ENCODE measurements at regions of chr10 and their contacts with region 1.

Region 1: GRCh38 chr10:110414563-110415309 is 83.0 kb upstream of the DUSP5 start:
- DNase-seq: peak; percentile 99
- ATAC-seq: peak; percentile 83
- H3K4me3 ChIP-seq: no peak overlapping the region
- H3K27ac ChIP-seq: peak overlapping the region; percentile 93
- H3K4me1 ChIP-seq: peaks cover 69% of the 10 kb centered on the region
- H3K27me3 ChIP-seq: no peaks in the 10 kb centered on the region
- CTCF ChIP-seq: no peak
- EP300 ChIP-seq: peak; percentile 97 to 99
- POLR2A ChIP-seq: peak; percentile 49; the same call in 1 of the 2 replicates
- RAD21 ChIP-seq: peak; percentile 38

Region 2: DNA sequence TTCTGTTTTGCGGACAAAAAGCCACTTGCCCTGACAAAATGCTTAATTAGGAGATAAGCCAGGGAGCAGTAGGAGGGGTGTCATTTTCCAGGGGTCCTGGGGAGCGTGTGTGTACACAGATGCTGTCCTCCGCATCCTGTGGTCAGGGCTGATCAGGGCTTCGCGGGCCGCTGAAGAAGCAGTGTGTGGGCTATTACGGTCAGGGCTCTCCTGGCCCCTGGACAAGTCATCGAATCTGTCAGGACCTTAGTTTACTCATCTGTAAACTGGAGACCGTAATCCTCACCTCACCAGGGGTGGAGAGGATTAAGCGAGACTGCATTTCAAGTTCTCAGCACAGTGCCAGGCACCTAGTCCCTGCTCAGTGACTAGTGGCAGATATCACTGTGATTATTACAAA is 233.3 kb before region 1 on chr10:
- CTCF ChIA-PET with region 1: no interaction called
- POLR2A ChIA-PET with region 1: no interaction called
- RAD21 ChIA-PET with region 1: no interaction called
- SMC1A ChIA-PET with region 1: no interaction called
- in situ Hi-C with region 1: no loop called
- intact Hi-C with region 1: no loop called
- DNase-seq: no peak
- ATAC-seq: no peak
- H3K4me3 ChIP-seq: no peak overlapping the region
- H3K27ac ChIP-seq: no peak overlapping the region
- H3K4me1 ChIP-seq: no peaks in the 10 kb centered on the region
- H3K27me3 ChIP-seq: peaks cover 0 to 3% of the 10 kb centered on the region in 2 experiments; a peak in 2 of 4 replicates
- CTCF ChIP-seq: no peak
- EP300 ChIP-seq: no peak
- POLR2A ChIP-seq: no peak
- RAD21 ChIP-seq: no peak

Region 3: GRCh38 chr10:110311357-110311949 is 103.3 kb before region 1 on chr10:
- CTCF ChIA-PET with region 1: no interaction called
- POLR2A ChIA-PET with region 1: no interaction called
- RAD21 ChIA-PET with region 1: interaction called, 4 read pairs
- SMC1A ChIA-PET with region 1: interaction called, 5 read pairs
- in situ Hi-C with region 1: no loop called
- intact Hi-C with region 1: loop called (anchors 2 kb)
- DNase-seq: peak; percentile 47
- ATAC-seq: peak; percentile 83
- H3K4me3 ChIP-seq: no peak overlapping the region
- H3K27ac ChIP-seq: no peak overlapping the region
- H3K4me1 ChIP-seq: 0 out of 2 replicates have a peak, but pooled peaks cover 2% of the 10 kb centered on the region
- H3K27me3 ChIP-seq: no peaks in the 10 kb centered on the region
- CTCF ChIP-seq: peak; percentile 62 to 76 (median 68); a peak in 5 of 6 replicates
- EP300 ChIP-seq: no peak
- POLR2A ChIP-seq: no peak
- RAD21 ChIP-seq: peak; percentile 96

Region 4: GRCh38 chr10:110361800-110362456 is 52.8 kb before region 1 on chr10:
- CTCF ChIA-PET with region 1: interaction called, 124 read pairs
- POLR2A ChIA-PET with region 1: interaction called, 90 read pairs
- RAD21 ChIA-PET with region 1: interaction called, 241 read pairs
- SMC1A ChIA-PET with region 1: interaction called, 283 read pairs
- in situ Hi-C with region 1: loop called (anchors 5 kb)
- intact Hi-C with region 1: no loop called
- DNase-seq: no peak
- ATAC-seq: peak; percentile 44
- H3K4me3 ChIP-seq: no peak overlapping the region
- H3K27ac ChIP-seq: peak overlapping the region; percentile 13; the same call in 1 of the 2 replicates
- H3K4me1 ChIP-seq: peaks cover 46% of the 10 kb centered on the region
- H3K27me3 ChIP-seq: no peaks in the 10 kb centered on the region
- CTCF ChIP-seq: no peak
- EP300 ChIP-seq: no peak
- POLR2A ChIP-seq: no peak
- RAD21 ChIP-seq: no peak

Region 5: DNA sequence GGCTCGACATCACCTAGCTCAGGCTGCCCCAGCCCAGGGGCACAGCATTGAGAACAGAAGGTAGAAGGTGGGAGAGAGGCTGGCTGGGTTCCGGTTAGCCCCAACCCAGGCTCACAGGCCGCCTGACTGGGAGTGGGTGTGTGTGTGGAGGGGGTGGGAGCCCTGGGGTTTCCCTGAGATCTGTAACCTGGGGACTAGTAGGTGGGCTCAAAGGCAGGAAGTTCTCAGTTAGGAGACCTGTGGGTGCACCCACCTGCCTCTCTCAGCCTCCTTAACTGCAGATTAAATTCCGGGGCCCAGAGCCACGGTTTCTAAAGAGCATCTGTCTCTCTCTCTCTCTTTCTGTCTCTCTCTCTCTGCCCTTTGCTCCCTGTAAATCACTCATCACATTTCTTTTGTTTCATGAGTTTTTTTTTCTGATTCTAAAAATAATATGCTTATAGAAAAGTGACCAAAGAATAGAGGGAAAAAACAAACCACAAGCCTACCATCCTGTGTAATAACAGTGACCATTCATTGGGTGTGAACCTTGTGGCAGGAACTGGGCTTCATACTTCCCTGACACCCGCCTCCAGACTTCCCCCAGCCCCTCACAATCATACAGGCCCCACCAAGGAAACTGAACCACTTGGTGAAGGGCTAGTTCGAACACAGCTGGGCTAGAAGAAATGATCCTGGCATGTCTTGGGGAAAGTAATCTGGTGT is 26.6 kb before region 1 on chr10:
- CTCF ChIA-PET with region 1: interaction called, 7 read pairs
- POLR2A ChIA-PET with region 1: interaction called, 6 read pairs
- RAD21 ChIA-PET with region 1: interaction called, 17 read pairs
- SMC1A ChIA-PET with region 1: interaction called, 81 read pairs
- in situ Hi-C with region 1: no loop called
- intact Hi-C with region 1: loop called (anchors 1 kb)
- DNase-seq: peak; percentile 83
- ATAC-seq: peak; percentile 87
- H3K4me3 ChIP-seq: no peak overlapping the region
- H3K27ac ChIP-seq: peak overlapping the region; percentile 75
- H3K4me1 ChIP-seq: peaks cover 26% of the 10 kb centered on the region
- H3K27me3 ChIP-seq: no peaks in the 10 kb centered on the region
- CTCF ChIP-seq: no peak
- EP300 ChIP-seq: peak in 1 of 2 experiments; percentile 96; a peak in 3 of 4 replicates
- POLR2A ChIP-seq: no peak
- RAD21 ChIP-seq: peak; percentile 22; the same call in 1 of the 2 replicates

Region 6: DNA sequence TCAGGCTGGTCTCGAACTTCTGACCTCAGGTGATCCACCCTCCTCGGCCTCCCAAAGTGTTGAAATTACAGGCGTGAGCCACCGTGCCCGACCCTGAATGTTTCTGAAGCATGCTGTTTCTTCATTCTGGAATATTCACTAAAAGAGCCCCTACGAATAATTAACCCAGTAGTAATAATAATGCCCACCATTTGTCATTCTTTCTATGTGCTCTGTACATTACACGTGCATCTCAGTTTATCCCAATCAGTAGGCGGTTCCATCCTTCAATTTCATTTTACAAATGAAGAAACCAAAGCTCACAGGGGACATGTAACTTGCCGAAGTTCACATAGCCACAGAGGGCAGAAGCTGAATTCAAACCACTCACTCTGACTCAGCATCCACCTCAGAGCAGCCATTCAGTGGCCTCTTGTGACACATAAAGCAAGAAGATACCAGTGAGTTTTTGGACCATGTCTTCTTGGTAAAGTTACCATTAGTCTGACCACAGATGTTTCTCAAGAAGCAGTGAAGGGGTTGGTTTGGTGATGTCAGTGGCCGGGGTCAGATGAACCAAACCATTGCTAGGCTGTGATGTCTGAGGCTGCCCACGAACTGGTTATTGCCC is 11.1 kb after region 1 on chr10:
- CTCF ChIA-PET with region 1: interaction called, 4 read pairs
- POLR2A ChIA-PET with region 1: interaction called, 6 read pairs
- RAD21 ChIA-PET with region 1: interaction called, 31 read pairs
- SMC1A ChIA-PET with region 1: interaction called, 23 read pairs
- in situ Hi-C with region 1: no loop called
- intact Hi-C with region 1: loop called (anchors 1 kb)
- DNase-seq: peak; percentile 89
- ATAC-seq: peak; percentile 86
- H3K4me3 ChIP-seq: no peak overlapping the region
- H3K27ac ChIP-seq: peak overlapping the region; percentile 60
- H3K4me1 ChIP-seq: peaks cover 65% of the 10 kb centered on the region
- H3K27me3 ChIP-seq: no peaks in the 10 kb centered on the region
- CTCF ChIP-seq: no peak
- EP300 ChIP-seq: peak; percentile 56 to 63; a peak in 1 of 4 replicates
- POLR2A ChIP-seq: no peak
- RAD21 ChIP-seq: peak; percentile 34; the same call in 1 of the 2 replicates

Region 7: DNA sequence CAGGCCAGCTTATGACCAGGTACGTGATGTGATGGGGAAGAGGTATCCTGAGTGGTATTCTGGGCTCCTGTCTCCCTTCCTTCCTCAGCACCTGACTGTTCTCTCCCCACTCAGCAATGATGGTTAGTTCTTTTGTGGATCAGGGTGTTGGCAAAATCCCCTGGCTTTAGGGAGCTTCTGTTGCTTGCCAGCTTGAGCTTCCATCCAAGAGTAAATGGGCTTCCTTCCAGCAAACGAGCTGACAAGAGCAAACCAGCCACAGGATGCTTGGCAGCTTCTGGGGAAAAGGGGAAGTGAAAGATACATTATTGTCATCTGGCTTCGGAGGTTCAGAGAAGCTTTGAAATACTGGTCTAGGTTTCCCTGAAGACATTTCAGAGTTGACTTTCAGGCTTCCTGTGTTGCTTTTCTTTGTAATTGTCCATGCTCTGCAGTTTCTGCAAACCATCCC is 88.1 kb after region 1 on chr10:
- CTCF ChIA-PET with region 1: interaction called, 16 read pairs
- POLR2A ChIA-PET with region 1: interaction called, 94 read pairs
- RAD21 ChIA-PET with region 1: interaction called, 181 read pairs
- SMC1A ChIA-PET with region 1: interaction called, 154 read pairs
- in situ Hi-C with region 1: no loop called
- intact Hi-C with region 1: no loop called
- DNase-seq: peak; percentile 93
- ATAC-seq: peak; percentile 35
- H3K4me3 ChIP-seq: peak overlapping the region; percentile 95
- H3K27ac ChIP-seq: peak overlapping the region; percentile 91
- H3K4me1 ChIP-seq: peaks cover 49% of the 10 kb centered on the region
- H3K27me3 ChIP-seq: no peaks in the 10 kb centered on the region
- CTCF ChIP-seq: no peak
- EP300 ChIP-seq: peak; percentile 82 to 93; a peak in 3 of 4 replicates
- POLR2A ChIP-seq: peak; percentile 49
- RAD21 ChIP-seq: peak; percentile 21; the same call in 1 of the 2 replicates

Region 8: DNA sequence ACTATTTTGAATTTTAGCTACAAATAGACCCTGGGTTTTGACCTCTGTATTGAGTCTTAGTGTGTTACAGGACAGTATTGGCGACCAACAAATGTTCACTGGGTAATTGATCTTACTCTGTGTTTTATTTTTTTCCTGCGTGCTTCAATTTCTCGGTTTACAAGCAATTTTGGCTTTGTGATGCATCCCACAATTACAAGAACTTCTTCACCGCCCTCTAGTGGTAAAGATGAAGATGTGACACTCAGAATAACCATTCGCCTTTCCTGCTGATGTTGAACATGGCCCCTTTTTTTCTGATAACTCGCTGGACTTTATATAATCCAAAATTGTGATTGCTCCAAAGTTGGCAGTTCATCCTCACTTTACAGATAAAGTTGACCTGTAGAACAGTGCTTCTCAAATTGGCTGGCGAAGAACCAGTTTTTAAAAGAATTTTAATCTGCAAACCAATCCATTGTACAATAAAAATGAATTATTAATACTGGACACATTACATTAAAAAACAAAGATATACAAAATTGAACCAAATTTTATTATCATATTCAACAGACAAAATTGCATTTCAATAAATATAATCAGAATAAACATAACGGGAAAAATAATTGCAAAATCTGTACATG is 132.5 kb after region 1 on chr10:
- CTCF ChIA-PET with region 1: interaction called, 4 read pairs
- POLR2A ChIA-PET with region 1: no interaction called
- RAD21 ChIA-PET with region 1: interaction called, 10 read pairs
- SMC1A ChIA-PET with region 1: interaction called, 22 read pairs
- in situ Hi-C with region 1: no loop called
- intact Hi-C with region 1: loop called (anchors 1 kb)
- DNase-seq: no peak
- ATAC-seq: peak; percentile 89
- H3K4me3 ChIP-seq: no peak overlapping the region
- H3K27ac ChIP-seq: no peak overlapping the region
- H3K4me1 ChIP-seq: peaks cover 5% of the 10 kb centered on the region; the same call in 1 of the 2 replicates
- H3K27me3 ChIP-seq: peaks cover 0 to 2% of the 10 kb centered on the region in 2 experiments; a peak in 1 of 4 replicates
- CTCF ChIP-seq: peak; percentile 72 to 83 (median 73)
- EP300 ChIP-seq: no peak
- POLR2A ChIP-seq: no peak
- RAD21 ChIP-seq: peak; percentile 95

Region 9: DNA sequence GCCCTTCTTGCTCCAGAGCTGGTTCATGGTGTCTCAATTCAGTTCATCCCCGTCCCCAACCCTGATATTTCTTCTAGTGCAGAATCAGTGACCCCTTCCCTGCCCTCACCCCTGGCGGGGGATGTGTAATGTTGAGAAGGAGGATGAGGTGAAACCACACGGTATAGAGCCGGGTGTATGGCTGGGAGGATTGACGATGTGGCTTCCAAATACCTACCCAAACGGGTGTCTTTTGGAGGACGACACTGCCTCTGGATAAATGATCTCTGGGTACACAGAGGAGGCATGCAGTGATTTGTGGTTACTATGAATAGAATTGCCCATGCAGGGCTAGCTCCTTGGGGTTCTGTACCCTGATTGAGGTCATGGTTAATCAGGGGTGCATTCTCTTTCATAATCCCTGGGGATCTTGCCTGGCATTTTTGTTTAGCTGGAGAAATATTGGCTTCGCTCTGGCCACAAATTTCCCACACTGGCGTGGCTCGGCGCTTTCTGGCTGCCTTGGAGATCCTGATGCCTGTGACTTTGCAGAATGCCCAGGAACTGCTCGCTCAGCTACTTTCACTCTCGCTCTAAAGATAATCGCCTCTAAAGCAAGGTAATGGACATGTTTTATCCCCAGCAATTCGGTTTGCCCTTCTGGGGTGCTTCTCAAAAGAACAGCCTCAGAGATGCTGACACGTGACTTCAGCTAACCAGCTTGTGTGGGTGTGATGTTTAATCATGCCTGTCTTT is 318.6 kb after region 1 on chr10:
- CTCF ChIA-PET with region 1: no interaction called
- POLR2A ChIA-PET with region 1: no interaction called
- RAD21 ChIA-PET with region 1: no interaction called
- SMC1A ChIA-PET with region 1: no interaction called
- in situ Hi-C with region 1: no loop called
- intact Hi-C with region 1: no loop called
- DNase-seq: no peak
- ATAC-seq: 0 out of 3 replicates have a peak, but pooled peaks have one; percentile 16
- H3K4me3 ChIP-seq: no peak overlapping the region; the same call in 1 of the 2 replicates
- H3K27ac ChIP-seq: no peak overlapping the region
- H3K4me1 ChIP-seq: no peaks in the 10 kb centered on the region
- H3K27me3 ChIP-seq: peaks cover 0 to 6% of the 10 kb centered on the region in 2 experiments; a peak in 1 of 4 replicates
- CTCF ChIP-seq: no peak
- EP300 ChIP-seq: no peak
- POLR2A ChIP-seq: no peak
- RAD21 ChIP-seq: no peak